H1 (cell line): ENCODE measurements at regions of chr4 and their contacts with region 1.

Region 1: DNA sequence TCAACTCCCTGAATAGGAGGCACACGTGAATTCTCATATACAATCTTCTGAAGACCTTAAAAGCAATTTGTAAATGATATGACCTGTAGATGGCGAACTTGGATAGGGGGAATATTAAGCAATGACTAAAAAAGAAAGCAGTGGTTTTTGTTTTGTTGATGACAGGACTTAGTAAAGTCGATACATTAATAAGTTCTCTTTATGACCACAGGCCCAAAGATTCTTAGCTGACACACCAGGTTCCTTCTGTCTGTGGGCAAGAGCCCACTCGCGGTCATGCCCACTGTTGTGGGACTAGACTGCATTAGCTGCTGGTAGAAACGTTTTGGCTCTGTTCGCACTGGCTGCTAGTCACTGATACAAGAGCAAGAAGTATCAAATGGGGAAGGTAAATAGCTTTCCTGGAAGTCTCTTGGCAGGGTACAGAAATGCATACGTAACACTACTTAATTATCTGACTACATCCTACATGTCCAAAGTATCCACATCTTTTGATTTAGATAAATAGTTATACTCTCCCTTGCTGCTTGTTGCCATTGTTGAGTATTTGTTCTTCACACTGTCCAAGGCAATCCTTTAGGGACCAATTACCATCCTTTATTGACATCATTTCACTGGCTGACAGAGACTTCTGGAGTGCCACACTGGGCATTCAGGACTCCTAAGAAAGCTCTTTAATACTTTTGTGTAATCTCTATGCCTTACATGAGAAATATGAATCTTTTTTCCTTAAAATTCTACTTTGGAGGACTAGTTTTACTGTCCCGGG is 31.0 kb downstream of the ALPK1 start:
- DNase-seq: no peak
- H3K4me3 ChIP-seq: no peak overlapping the region
- H3K27ac ChIP-seq: no peak overlapping the region
- H3K4me1 ChIP-seq: peaks cover 0 to 2% (median 0%) of the 10 kb centered on the region in 4 experiments; a peak in 1 of 7 replicates
- H3K27me3 ChIP-seq: no peaks in the 10 kb centered on the region; a peak in 2 of 7 replicates
- CTCF ChIP-seq: peak in 2 of 3 experiments; percentile 38 to 49; a peak in 2 of 4 replicates
- EP300 ChIP-seq: no peak
- POLR2A ChIP-seq: no peak
- RAD21 ChIP-seq: peak; percentile 80 to 84

Region 2: DNA sequence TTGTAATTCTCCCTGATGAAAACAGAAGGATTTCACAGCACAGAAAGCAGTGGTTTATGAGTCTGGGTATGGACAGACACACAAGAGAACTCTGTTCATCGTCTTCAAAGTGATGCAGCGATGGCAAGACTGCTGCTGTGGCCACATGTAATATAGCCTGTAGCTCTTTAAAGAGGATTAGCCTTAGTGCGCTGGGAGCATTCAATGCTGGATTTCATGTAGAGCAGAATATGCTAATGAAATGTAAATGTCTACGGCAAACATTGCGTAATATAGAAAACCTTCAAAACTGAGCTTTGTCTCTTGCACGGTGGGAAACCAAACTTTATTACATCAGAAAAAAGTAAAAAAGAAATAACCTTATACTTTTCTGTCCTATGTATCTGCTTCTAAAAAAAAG is 11.9 kb after region 1 on chr4:
- CTCF ChIA-PET with region 1: interaction called, 13 read pairs
- POLR2A ChIA-PET with region 1: no interaction called
- DNase-seq: no peak
- H3K4me3 ChIP-seq: peak overlapping the region in 1 of 4 experiments; percentile 20; a peak in 1 of 8 replicates
- H3K27ac ChIP-seq: no peak overlapping the region
- H3K4me1 ChIP-seq: peaks cover 4 to 16% (median 14%) of the 10 kb centered on the region in 4 experiments; a peak in 6 of 7 replicates
- H3K27me3 ChIP-seq: no peaks in the 10 kb centered on the region; a peak in 2 of 7 replicates
- CTCF ChIP-seq: no peak
- EP300 ChIP-seq: no peak
- POLR2A ChIP-seq: no peak
- RAD21 ChIP-seq: no peak

Region 3: DNA sequence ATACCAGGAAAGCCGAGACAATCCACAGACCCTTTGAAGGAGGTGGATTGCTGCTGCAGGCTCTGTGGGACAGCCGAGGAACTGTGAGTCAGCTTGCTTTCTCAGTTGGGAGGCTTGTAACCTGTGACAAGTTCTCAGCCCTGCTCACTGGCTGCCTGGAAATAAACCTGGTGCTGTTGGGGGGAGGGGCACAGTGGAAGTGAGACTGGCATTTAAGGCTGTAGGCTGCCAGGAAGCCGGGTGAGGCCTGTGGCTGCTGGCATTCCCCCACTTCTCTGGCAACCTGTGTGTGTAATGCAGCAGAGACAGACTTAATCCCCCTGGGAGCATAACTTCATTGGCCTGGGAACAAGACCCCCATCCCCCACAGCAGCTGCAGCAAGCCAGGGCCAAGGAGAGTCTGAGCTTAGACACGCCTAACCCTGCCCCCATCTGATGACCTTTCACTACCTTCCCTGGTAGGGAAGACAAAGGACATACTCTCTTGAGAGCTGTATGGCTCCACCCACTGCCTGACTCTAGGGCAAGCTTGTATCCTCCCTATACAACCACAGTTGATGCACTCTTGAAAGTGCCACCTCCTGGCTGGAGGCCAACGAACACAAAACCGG is 33.1 kb after region 1 on chr4:
- CTCF ChIA-PET with region 1: interaction called, 12 read pairs
- POLR2A ChIA-PET with region 1: no interaction called
- DNase-seq: peak; percentile 44 to 68
- H3K4me3 ChIP-seq: peak overlapping the region in 2 of 4 experiments; percentile 10 to 36; a peak in 2 of 8 replicates
- H3K27ac ChIP-seq: peak overlapping the region; percentile 61
- H3K4me1 ChIP-seq: peaks cover 3 to 10% (median 6%) of the 10 kb centered on the region in 4 experiments; a peak in 6 of 7 replicates
- H3K27me3 ChIP-seq: no peaks in the 10 kb centered on the region
- CTCF ChIP-seq: peak; percentile 6 to 38 (median 35)
- EP300 ChIP-seq: peak in 1 of 2 experiments; percentile 84; a peak in 1 of 3 replicates
- POLR2A ChIP-seq: peak in 1 of 2 experiments; percentile 67; a peak in 1 of 3 replicates
- RAD21 ChIP-seq: peak; percentile 11 to 34; a peak in 2 of 4 replicates

Region 4: DNA sequence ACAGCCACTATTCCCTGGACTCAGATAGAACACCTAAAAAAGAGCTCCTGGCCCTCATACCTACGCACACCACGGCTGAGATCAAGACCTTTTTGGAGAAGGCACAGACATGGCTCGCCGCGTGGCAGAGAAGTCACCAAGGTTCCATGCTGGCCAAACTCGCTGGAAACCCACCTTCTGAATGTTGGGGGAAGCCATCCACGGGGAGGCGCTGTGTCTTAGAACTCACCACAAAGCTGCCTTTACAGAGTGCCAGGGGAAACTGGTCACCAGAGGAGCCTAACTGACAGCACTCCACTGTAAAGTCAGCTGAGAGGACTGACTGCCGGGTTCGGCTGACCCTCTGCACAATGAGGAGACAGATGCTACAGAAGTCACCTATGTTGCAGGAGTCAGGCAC is 89.9 kb after region 1 on chr4:
- CTCF ChIA-PET with region 1: interaction called, 17 read pairs
- POLR2A ChIA-PET with region 1: no interaction called
- DNase-seq: peak; percentile 19 to 84
- H3K4me3 ChIP-seq: no peak overlapping the region
- H3K27ac ChIP-seq: no peak overlapping the region
- H3K4me1 ChIP-seq: peaks cover 0 to 3% (median 1%) of the 10 kb centered on the region in 4 experiments; a peak in 2 of 7 replicates
- H3K27me3 ChIP-seq: no peaks in the 10 kb centered on the region
- CTCF ChIP-seq: peak; percentile 76 to 82 (median 78)
- EP300 ChIP-seq: no peak
- POLR2A ChIP-seq: no peak
- RAD21 ChIP-seq: peak; percentile 62 to 77

Region 5: GRCh38 chr4:112604589-112604988 is 276.4 kb after region 1 on chr4:
- CTCF ChIA-PET with region 1: interaction called, 19 read pairs
- POLR2A ChIA-PET with region 1: no interaction called
- DNase-seq: peak; percentile 5 to 53
- H3K4me3 ChIP-seq: no peak overlapping the region
- H3K27ac ChIP-seq: no peak overlapping the region
- H3K4me1 ChIP-seq: no peaks in the 10 kb centered on the region
- H3K27me3 ChIP-seq: no peaks in the 10 kb centered on the region
- CTCF ChIP-seq: peak in 2 of 3 experiments; percentile 62 to 69; a peak in 3 of 4 replicates
- EP300 ChIP-seq: no peak
- POLR2A ChIP-seq: no peak
- RAD21 ChIP-seq: peak; percentile 56 to 67